Activated CD8-positive, alpha-beta T cell treated with anti-CD3 and anti-CD28 coated beads for 36 hours (primary cell): ENCODE measurements at regions of chr5 and their contacts with region 1.

Region 1: GRCh38 chr5:142769741-142770631 is at the start of gene ARHGAP26:
- DNase-seq: peak; percentile 96
- ATAC-seq: peak; percentile 93
- H3K4me3 Mint-ChIP-seq: peak within 1 kb of the TSS; percentile 94
- H3K27ac Mint-ChIP-seq: peak within 1 kb of the TSS; percentile 89
- H3K4me1 Mint-ChIP-seq: peaks cover 36% of the 10 kb centered on the region
- H3K27me3 Mint-ChIP-seq: no peaks in the 10 kb centered on the region
- CTCF ChIP-seq: no peak
- total RNA-seq, gene ARHGAP26: 12.7 to 18.0 TPM

Region 2: DNA sequence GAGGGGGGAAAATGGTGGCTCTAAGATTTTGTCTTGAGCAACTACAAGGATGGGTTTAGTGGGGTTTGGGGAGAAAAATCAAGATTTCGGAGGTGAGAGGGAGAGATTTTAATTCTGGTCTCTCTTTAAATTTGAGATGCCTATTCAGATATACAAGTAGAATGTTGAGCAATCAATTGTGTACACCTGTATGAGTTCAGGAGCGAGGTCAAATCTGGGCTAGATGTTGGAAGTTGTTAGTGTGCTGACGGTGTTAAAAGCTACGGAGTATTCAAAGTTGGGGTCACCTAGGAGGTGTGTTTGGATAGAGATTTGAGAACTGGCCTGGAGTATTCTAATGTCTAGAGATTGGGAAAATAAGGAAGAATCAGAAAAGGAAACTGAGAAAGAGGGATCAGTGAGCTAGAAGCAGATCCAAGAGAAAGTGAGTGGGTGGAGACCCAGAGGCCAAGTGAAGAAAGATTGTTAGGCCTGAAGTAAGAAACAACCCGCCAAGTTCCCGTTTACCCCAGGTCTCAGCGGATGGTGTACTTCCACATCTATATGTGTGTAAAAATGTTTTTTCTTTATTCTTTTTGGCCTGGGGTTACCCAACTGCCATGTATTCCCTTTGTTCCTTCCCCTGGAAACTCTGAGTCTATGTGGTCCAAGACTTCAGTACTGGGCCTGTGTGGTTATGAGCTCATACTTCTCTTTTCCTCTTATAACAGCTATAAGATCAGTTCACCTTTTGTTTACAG is 11.8 kb before region 1 on chr5:
- CTCF ChIA-PET with region 1: interaction called, 139 read pairs
- POLR2A ChIA-PET with region 1: no interaction called
- intact Hi-C with region 1: no loop called
- DNase-seq: no peak
- ATAC-seq: peak; percentile 71
- H3K4me3 Mint-ChIP-seq: no peak overlapping the region
- H3K27ac Mint-ChIP-seq: no peak overlapping the region
- H3K4me1 Mint-ChIP-seq: peaks cover 16% of the 10 kb centered on the region
- H3K27me3 Mint-ChIP-seq: no peaks in the 10 kb centered on the region
- CTCF ChIP-seq: no peak

Region 3: DNA sequence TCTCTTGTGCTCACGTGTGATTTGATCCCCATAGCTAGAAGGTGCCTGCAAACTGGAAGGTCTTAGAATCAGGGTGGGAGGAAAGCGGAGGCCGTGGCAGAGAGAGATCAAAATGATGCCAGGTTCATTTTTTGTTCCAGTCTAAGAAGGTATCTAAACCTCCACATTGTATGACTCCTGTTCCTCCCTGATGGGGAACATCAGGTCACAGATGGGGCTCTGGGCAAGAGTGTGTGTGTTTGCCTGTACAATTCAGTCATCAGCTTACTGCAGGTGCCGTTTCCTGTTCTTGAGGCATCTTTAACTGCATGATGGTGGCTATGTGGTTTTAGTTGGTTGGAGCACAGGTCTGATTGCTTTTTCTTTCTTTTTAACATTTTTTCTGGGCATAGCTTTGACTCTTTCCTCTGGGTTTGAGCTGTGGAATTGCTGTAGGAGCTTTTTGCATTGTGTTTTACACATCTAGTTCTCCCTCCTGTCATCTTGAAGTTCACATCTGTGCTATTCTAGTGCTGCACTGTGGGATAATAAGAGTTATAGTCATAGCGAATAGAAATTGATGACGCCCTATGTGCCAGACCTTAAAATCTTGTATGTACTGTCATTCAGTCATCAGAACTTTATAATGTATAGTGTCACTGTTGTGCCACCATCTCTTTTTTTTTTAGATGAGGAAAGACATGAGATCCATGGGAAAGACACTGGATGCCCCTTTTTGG is 30.9 kb after region 1 on chr5:
- CTCF ChIA-PET with region 1: interaction called, 48 read pairs
- POLR2A ChIA-PET with region 1: interaction called, 35 read pairs
- intact Hi-C with region 1: no loop called
- DNase-seq: peak; percentile 74
- ATAC-seq: peak; percentile 78
- H3K4me3 Mint-ChIP-seq: peak overlapping the region; percentile 70
- H3K27ac Mint-ChIP-seq: peak overlapping the region; percentile 93
- H3K4me1 Mint-ChIP-seq: peaks cover 71% of the 10 kb centered on the region
- H3K27me3 Mint-ChIP-seq: no peaks in the 10 kb centered on the region
- CTCF ChIP-seq: no peak

Region 4: GRCh38 chr5:142860270-142860669 is 90.3 kb after region 1 on chr5:
- CTCF ChIA-PET with region 1: interaction called, 16 read pairs
- POLR2A ChIA-PET with region 1: interaction called, 4 read pairs
- intact Hi-C with region 1: loop called (anchors 5 kb)
- DNase-seq: no peak
- ATAC-seq: no peak
- H3K4me3 Mint-ChIP-seq: no peak overlapping the region
- H3K27ac Mint-ChIP-seq: no peak overlapping the region
- H3K4me1 Mint-ChIP-seq: peaks cover 53% of the 10 kb centered on the region
- H3K27me3 Mint-ChIP-seq: no peaks in the 10 kb centered on the region
- CTCF ChIP-seq: no peak

Region 5: DNA sequence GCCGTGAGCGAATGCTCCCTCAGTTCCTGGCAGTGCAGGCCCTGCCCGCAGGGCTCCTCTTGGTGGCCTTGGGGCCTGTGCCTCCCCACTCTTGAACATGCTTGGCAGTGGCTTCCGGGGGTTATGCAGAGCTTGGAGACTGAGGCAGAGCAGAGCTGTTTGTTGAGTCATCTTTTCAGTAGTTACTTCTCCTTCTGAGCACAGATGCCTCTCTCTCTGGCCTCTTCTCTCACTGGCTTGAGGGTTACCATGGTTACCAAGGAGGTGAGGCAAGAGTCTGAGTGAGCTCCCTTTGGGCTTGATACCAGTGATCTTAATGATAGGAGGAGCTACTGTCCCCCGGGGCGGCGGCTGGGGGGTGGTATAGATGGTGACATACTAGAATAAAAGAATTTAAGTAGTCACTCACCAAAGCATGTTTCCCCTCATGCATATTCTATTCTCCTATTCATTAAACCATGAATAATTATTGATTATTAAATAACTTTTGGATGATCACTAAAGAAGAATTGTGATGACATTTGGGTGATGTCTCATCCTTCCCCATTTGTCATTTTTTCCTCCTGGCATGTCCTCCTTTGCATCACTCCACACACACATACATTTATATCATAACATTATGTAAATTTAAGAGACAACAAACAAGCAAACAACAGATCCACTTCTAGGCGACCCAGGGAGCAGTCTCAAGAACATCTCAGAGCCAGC is 111.2 kb after region 1 on chr5:
- CTCF ChIA-PET with region 1: interaction called, 30 read pairs
- POLR2A ChIA-PET with region 1: no interaction called
- intact Hi-C with region 1: no loop called
- DNase-seq: no peak
- ATAC-seq: peak; percentile 37
- H3K4me3 Mint-ChIP-seq: no peak overlapping the region
- H3K27ac Mint-ChIP-seq: no peak overlapping the region
- H3K4me1 Mint-ChIP-seq: peaks cover 8% of the 10 kb centered on the region
- H3K27me3 Mint-ChIP-seq: no peaks in the 10 kb centered on the region
- CTCF ChIP-seq: no peak

Region 6: DNA sequence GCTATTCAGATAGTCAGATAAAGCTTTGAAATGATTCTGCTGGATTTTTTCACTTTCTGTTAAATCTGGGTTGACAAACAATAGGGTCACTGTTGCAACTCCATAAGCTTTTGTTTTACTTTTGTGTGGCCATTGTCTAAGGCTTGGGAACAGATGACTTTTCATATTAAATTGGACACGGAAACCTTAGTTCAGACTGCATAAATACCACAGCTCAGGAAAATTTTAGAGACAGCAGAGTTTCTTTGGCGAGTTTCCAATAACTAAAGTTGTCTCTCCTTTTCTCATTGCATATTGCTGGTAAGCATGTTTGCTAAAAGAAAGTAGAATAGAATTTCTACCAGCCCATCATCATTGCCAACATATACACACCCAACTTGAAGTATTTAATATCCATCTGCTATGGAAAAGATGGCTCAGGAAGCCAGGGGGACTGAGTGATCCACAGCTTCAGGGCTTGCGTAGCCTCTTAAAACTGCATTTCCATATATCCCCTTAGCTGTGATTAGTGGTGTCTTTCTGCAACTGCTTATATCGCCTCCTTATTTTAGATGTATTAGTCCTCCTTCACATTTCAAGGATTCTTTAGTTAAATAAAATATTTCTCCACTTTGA is 168.4 kb after region 1 on chr5:
- CTCF ChIA-PET with region 1: no interaction called
- POLR2A ChIA-PET with region 1: no interaction called
- intact Hi-C with region 1: no loop called
- DNase-seq: no peak
- ATAC-seq: no peak
- H3K4me3 Mint-ChIP-seq: no peak overlapping the region
- H3K27ac Mint-ChIP-seq: no peak overlapping the region
- H3K4me1 Mint-ChIP-seq: peaks cover 40% of the 10 kb centered on the region
- H3K27me3 Mint-ChIP-seq: no peaks in the 10 kb centered on the region
- CTCF ChIP-seq: no peak